ENCODE measurements at regions of chr18 and their contacts with region 1.

Region 1: GRCh38 chr18:54149078-54149697 is 75.3 kb downstream of the MBD2 start:
- DNase-seq: peak; percentile 87
- H3K4me3 Mint-ChIP-seq: peak overlapping the region; percentile 49
- H3K27ac Mint-ChIP-seq: peak overlapping the region; percentile 97
- H3K4me1 Mint-ChIP-seq: peaks cover 47% of the 10 kb centered on the region
- H3K27me3 Mint-ChIP-seq: no peaks in the 10 kb centered on the region

Region 2: DNA sequence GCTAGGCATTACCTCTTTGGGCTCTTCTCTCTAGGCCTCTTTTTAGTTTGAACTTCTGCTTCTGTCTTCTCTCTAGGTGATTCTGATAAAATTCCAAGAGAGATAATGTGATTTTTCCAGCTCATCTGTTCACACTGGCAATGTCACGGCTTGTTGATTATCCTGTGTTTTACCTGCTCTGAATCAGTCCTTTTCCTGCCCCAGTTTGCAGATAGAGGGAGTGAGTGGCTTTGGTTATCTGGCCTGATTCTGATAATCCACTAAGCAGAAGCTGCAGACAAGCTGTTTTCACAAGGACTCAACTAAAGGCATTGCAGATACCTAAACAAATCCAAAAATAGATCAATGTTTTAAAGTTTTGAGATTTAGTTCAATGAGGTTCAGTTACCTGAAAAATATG is 1697.3 kb before region 1 on chr18:
- CTCF ChIA-PET with region 1: no interaction called
- POLR2A ChIA-PET with region 1: no interaction called
- intact Hi-C with region 1: no loop called
- DNase-seq: no peak
- H3K4me3 Mint-ChIP-seq: no peak overlapping the region
- H3K27ac Mint-ChIP-seq: no peak overlapping the region
- H3K4me1 Mint-ChIP-seq: no peaks in the 10 kb centered on the region
- H3K27me3 Mint-ChIP-seq: no peaks in the 10 kb centered on the region

Region 3: GRCh38 chr18:54127759-54128378 is 21.3 kb before region 1 on chr18:
- CTCF ChIA-PET with region 1: no interaction called
- POLR2A ChIA-PET with region 1: interaction called, 3 read pairs
- intact Hi-C with region 1: loop called (anchors 1 kb)
- DNase-seq: peak; percentile 47
- H3K4me3 Mint-ChIP-seq: no peak overlapping the region
- H3K27ac Mint-ChIP-seq: no peak overlapping the region
- H3K4me1 Mint-ChIP-seq: peaks cover 15% of the 10 kb centered on the region
- H3K27me3 Mint-ChIP-seq: no peaks in the 10 kb centered on the region

Region 4: DNA sequence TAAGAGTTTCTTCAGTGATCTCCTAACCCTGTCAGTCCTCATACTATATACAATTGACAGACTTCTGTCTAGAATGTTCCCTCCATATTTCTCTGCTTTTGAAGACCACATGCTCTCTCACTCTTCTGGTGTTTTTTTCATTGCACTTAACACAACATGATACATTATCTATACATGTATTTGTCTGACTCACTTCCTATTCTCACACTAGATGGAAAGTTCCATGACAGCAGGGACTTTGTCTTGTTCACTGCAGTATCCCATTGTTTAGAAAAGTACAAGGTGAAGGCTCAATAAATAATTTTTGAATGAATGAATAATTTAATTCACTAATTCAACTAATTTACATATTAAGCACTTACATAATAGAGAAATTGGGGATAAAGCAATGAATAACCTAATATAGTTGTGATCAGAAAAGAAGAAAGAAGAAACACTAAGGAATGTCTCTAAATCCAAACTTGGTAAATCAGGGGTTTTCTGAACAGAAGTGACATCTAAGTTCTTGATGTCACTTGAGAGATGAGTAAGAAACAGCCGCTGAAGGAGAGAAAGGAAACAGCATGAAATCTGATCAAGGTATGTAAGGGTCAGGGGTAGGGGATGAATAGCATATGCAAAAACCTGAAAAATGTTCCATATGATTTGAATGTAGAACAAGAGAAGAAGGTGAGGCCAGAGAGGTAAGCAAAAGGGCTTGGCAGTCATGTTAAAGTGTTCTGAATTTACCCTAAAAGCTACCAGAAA is 32.8 kb after region 1 on chr18:
- CTCF ChIA-PET with region 1: no interaction called
- POLR2A ChIA-PET with region 1: no interaction called
- intact Hi-C with region 1: loop called (anchors 1 kb)
- DNase-seq: no peak
- H3K4me3 Mint-ChIP-seq: no peak overlapping the region
- H3K27ac Mint-ChIP-seq: no peak overlapping the region
- H3K4me1 Mint-ChIP-seq: peaks cover 3% of the 10 kb centered on the region
- H3K27me3 Mint-ChIP-seq: no peaks in the 10 kb centered on the region

Region 5: DNA sequence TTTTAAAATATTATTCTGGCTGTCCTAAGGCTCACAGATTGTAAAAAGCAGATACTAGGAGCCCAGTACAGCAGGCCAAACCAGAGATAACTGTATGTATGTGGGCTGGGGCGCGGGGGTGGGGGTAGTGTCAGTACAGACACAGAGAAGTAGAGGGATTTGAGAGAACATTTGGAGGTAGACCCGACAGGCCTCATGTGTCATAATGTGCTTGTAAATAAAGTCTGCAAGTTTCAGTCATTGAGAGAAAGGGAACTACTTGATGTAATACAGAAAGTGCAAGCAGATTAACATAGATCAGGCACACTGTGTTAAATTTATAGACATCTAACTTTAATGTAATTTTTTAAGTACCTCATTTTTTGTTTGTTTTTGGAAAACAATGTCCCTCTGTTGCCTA is 112.7 kb after region 1 on chr18:
- CTCF ChIA-PET with region 1: no interaction called
- POLR2A ChIA-PET with region 1: no interaction called
- intact Hi-C with region 1: loop called (anchors 1 kb)
- DNase-seq: peak; percentile 83
- H3K4me3 Mint-ChIP-seq: no peak overlapping the region
- H3K27ac Mint-ChIP-seq: peak overlapping the region; percentile 79
- H3K4me1 Mint-ChIP-seq: peaks cover 52% of the 10 kb centered on the region
- H3K27me3 Mint-ChIP-seq: no peaks in the 10 kb centered on the region

Region 6: DNA sequence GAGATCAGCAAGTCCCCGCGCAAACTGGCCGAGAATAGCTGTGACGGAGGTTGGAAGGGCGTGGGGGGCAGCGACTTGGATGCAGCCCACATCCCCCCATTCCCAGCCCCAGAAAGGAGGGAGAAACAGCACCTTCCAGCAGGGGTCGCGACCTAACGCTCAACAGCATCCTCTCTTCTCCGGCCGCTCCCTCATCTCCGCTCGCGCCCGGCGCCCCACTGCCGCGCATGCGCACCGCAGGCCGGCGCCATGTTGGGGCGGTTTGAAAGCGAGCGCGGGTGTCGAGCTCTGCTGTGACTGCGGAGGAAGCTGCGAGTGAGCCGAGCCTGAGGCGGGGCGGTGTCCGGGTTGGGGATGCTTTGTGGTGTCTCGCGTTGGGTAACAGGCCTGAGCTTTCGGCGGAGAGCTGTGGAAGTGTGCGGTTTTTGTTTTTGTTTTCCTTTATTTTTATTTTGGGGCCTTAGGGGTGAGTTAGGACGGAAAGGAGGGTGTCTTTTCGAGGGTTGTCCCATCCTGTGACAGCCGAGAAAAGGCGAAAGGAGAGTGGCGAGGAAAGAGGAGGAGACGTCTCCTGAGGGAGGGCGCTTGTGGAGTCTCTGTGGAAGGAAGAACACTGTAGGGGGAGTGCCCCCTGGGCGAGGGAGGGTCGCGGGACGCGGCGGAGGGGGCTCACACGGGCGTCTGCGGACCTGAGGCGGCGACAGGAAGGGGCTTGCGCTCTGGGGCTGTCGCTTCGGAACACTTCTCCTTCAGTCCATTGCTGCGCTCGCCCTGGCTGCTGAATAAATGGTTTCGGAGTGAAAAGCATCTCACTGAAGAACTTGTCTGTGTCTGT is 208.7 kb after region 1 on chr18 and contains the starts of genes C18orf54 and STARD6:
- CTCF ChIA-PET with region 1: no interaction called
- POLR2A ChIA-PET with region 1: no interaction called
- intact Hi-C with region 1: loop called (anchors 5 kb)
- DNase-seq: peak; percentile 93
- H3K4me3 Mint-ChIP-seq: peak within 1 kb of the TSS; percentile 95
- H3K27ac Mint-ChIP-seq: peak within 1 kb of the TSS; percentile 81
- H3K4me1 Mint-ChIP-seq: peaks cover 14% of the 10 kb centered on the region
- H3K27me3 Mint-ChIP-seq: peaks cover 3% of the 10 kb centered on the region
- total RNA-seq, gene C18orf54: 11.7 to 12.2 TPM
- total RNA-seq, gene STARD6: not detected

Region 7: GRCh38 chr18:54696592-54697293 is 547.6 kb after region 1 on chr18:
- CTCF ChIA-PET with region 1: no interaction called
- POLR2A ChIA-PET with region 1: no interaction called
- intact Hi-C with region 1: no loop called
- DNase-seq: no peak
- H3K4me3 Mint-ChIP-seq: no peak overlapping the region
- H3K27ac Mint-ChIP-seq: no peak overlapping the region
- H3K4me1 Mint-ChIP-seq: no peaks in the 10 kb centered on the region
- H3K27me3 Mint-ChIP-seq: peaks cover 3% of the 10 kb centered on the region

Measured in activated CD4-positive, alpha-beta memory T cell treated with anti-CD3 and anti-CD28 coated beads for 36 hours (primary cell).